ENCODE measurements at regions of chr7 and their contacts with region 1.

Region 1: GRCh38 chr7:104007614-104008013 is 18.2 kb upstream of the RELN start:
- DNase-seq: no peak
- H3K4me3 ChIP-seq: no peak overlapping the region
- H3K27ac ChIP-seq: no peak overlapping the region
- H3K4me1 ChIP-seq: no peaks in the 10 kb centered on the region
- H3K27me3 ChIP-seq: no peaks in the 10 kb centered on the region
- CTCF ChIP-seq: no peak
- EP300 ChIP-seq: no peak
- POLR2A ChIP-seq: no peak

Region 2: GRCh38 chr7:103985565-103986126 is 22.0 kb before region 1 on chr7:
- in situ Hi-C with region 1: no loop called
- intact Hi-C with region 1: loop called (anchors 1 kb)
- DNase-seq: no peak
- H3K4me3 ChIP-seq: no peak overlapping the region
- H3K27ac ChIP-seq: no peak overlapping the region
- H3K4me1 ChIP-seq: peaks cover 0 to 13% (median 11%) of the 10 kb centered on the region in 4 donors
- H3K27me3 ChIP-seq: peaks cover 40% of the 10 kb centered on the region
- CTCF ChIP-seq: no peak
- EP300 ChIP-seq: no peak
- POLR2A ChIP-seq: no peak

Region 3: GRCh38 chr7:104179178-104179577 is 171.6 kb after region 1 on chr7:
- in situ Hi-C with region 1: no loop called
- intact Hi-C with region 1: no loop called
- DNase-seq: no peak
- H3K4me3 ChIP-seq: no peak overlapping the region
- H3K27ac ChIP-seq: no peak overlapping the region
- H3K4me1 ChIP-seq: peaks cover 0 to 25% (median 8%) of the 10 kb centered on the region in 4 donors
- H3K27me3 ChIP-seq: no peaks in the 10 kb centered on the region
- CTCF ChIP-seq: no peak
- EP300 ChIP-seq: no peak
- POLR2A ChIP-seq: no peak

Region 4: GRCh38 chr7:104442481-104442880 is 434.9 kb after region 1 on chr7:
- in situ Hi-C with region 1: no loop called
- intact Hi-C with region 1: no loop called
- DNase-seq: no peak
- H3K4me3 ChIP-seq: no peak overlapping the region
- H3K27ac ChIP-seq: no peak overlapping the region
- H3K4me1 ChIP-seq: no peaks in the 10 kb centered on the region
- H3K27me3 ChIP-seq: no peaks in the 10 kb centered on the region
- CTCF ChIP-seq: no peak
- EP300 ChIP-seq: no peak
- POLR2A ChIP-seq: no peak

Measured in transverse colon (tissue), 4 donors.